BJ (cell line): ENCODE measurements at regions of chr20 and their contacts with region 1.

Region 1: DNA sequence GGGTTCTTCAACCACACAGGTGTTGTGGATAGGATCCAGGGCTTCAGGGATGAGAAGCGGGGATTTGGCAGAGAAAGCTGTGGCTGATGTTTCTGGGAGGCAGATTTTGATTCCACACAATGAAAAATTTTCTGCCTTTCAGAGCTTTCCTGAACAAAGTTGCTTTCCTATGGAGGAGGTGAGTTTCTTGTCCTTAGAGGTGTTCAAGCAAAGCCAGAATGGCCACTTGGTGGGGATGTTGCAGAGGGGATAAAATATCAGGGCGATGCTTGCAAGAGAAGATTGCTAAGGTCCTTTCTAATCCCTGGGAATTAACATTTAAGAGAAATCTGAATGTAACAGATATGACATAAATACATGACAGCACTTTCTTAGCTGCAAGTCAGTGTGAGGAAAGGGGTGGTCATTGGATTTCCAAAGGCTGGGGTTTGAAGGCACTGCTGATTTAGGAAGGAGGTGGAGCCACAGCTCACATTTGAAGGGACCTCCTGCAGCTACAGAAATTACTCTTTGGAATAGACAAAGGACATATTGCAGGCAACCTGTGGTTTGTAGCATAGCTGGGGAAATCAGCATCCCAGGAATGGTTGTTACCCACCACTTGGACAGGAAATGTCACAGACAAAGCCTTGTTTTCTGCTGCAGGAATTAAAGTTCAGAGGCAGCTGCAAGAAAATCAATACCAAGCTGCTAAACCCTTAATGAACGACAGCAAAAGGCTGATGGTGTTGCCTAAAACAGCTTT is 271.1 kb upstream of the CHD6 start:
- DNase-seq: no peak
- H3K4me3 ChIP-seq: no peak overlapping the region
- H3K27me3 ChIP-seq: no peaks in the 10 kb centered on the region
- CTCF ChIP-seq: no peak

Region 2: DNA sequence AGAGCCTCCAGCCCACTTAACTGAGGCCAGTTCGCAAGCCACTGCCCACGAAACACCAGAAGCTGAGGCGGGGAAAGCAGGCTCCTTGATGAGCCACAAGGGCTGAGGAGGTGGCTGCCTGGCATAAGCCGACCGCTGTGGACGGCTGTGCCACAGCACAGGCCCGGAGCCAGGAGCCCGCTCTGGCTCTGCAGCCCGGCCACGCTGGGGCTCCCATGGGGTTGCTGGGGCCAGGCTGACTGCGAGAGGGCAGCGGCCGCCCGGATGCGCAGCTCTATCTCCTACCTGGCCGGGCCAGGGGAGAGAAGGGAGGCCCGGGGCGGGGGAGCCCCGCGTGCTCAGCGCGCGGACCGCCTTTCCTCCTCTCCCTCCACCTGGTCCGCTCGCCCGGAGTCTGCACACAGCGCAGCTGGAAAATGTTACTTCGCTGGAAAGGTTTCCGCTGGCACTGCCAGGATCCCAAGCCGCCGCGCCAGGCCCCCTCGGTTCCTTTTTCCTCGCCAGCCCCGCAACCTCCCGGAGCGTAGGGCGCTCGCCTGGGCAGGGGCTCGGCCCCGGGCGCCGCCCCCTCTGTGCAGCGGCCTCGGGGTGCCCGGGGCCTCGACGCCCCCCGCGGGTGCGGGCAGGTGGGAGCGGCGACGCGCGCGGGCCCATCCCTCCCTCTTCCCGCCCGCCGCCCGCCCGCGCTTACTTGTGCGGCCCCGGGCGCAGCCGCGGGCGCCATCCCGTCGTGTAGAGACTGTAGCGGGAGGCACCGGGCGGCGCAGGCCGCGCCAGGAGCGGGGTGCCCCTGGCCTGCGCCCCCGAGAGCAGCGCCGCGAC is 523.3 kb before region 1 on chr20:
- CTCF ChIA-PET with region 1: no interaction called
- POLR2A ChIA-PET with region 1: no interaction called
- DNase-seq: no peak
- H3K4me3 ChIP-seq: peak overlapping the region; percentile 6; the same call in 1 of the 2 replicates
- H3K27me3 ChIP-seq: peaks cover 48% of the 10 kb centered on the region
- CTCF ChIP-seq: no peak

Region 3: GRCh38 chr20:41616228-41616925 is 272.9 kb before region 1 on chr20:
- CTCF ChIA-PET with region 1: no interaction called
- POLR2A ChIA-PET with region 1: interaction called, 21 read pairs
- DNase-seq: no peak
- H3K4me3 ChIP-seq: peak overlapping the region; percentile 77
- H3K27me3 ChIP-seq: no peaks in the 10 kb centered on the region
- CTCF ChIP-seq: no peak